SK-N-SH (cell line): ENCODE measurements at regions of chr16 and their contacts with region 1.

Region 1: GRCh38 chr16:2009789-2010510 is at the start of gene ZNF598:
- DNase-seq: peak; percentile 98
- H3K4me3 ChIP-seq: peak within 1 kb of the TSS; percentile 90 to 91
- H3K27ac ChIP-seq: peak within 1 kb of the TSS; percentile 81 to 87
- H3K4me1 ChIP-seq: peaks cover 18 to 46% of the 10 kb centered on the region in 2 experiments; a peak in 3 of 4 replicates
- H3K27me3 ChIP-seq: no peaks in the 10 kb centered on the region
- CTCF ChIP-seq: no peak
- EP300 ChIP-seq: no peak
- RAD21 ChIP-seq: no peak
- polyA plus RNA-seq, gene ZNF598: 38.1 and 47.8 TPM in 2 replicates

Region 2: GRCh38 chr16:1997494-1998353 is 12.2 kb before region 1 on chr16:
- CTCF ChIA-PET with region 1: interaction called, 108 read pairs
- POLR2A ChIA-PET with region 1: interaction called, 3 read pairs
- DNase-seq: no peak
- H3K4me3 ChIP-seq: no peak overlapping the region
- H3K27ac ChIP-seq: no peak overlapping the region
- H3K4me1 ChIP-seq: no peaks in the 10 kb centered on the region
- H3K27me3 ChIP-seq: no peaks in the 10 kb centered on the region
- CTCF ChIP-seq: no peak
- EP300 ChIP-seq: no peak
- RAD21 ChIP-seq: no peak